ENCODE measurements at regions of chr5 and their contacts with region 1.

Region 1: GRCh38 chr5:173615884-173616576 is 420 bp downstream of the BOD1 start:
- DNase-seq: peak; percentile 47 to 78 (median 73)
- ATAC-seq: peak; percentile 73
- H3K4me3 ChIP-seq: peak overlapping the region; percentile 71
- H3K4me3 Mint-ChIP-seq: peak overlapping the region; percentile 85 to 97 (median 92)
- H3K27ac ChIP-seq: peak overlapping the region; percentile 99
- H3K27ac Mint-ChIP-seq: peak overlapping the region; percentile 79 to 98 (median 93)
- H3K4me1 ChIP-seq: peaks cover 21 to 24% of the 10 kb centered on the region in 2 donors
- H3K4me1 Mint-ChIP-seq: peaks cover 28 to 60% (median 51%) of the 10 kb centered on the region in 7 donors
- H3K27me3 ChIP-seq: no peaks in the 10 kb centered on the region
- H3K27me3 Mint-ChIP-seq: no peaks in the 10 kb centered on the region

Region 2: DNA sequence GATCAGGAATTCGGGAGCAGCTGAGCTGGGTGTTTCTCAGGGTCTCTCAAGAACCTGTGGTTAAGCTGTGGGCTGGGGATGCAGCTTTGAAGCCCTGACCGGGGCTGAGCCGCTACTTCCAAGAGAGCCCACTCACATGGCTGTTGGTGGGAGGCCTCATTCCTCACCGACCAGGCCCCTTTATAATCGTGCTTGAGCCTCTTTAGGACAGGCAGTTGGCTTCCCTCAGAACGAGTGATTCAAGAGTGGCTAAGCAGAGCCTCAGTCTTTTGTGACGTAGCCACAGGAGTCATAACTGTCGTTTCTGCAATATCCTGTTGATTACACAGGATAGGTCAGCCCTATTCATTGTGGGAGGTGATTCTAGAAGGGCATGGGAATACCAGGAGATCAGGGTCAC is 785.2 kb before region 1 on chr5:
- CTCF ChIA-PET with region 1: no interaction called
- POLR2A ChIA-PET with region 1: no interaction called
- intact Hi-C with region 1: no loop called
- DNase-seq: no peak
- ATAC-seq: peak; percentile 52
- H3K4me3 ChIP-seq: no peak overlapping the region
- H3K4me3 Mint-ChIP-seq: peak overlapping the region in 1 of 10 donors; percentile 13
- H3K27ac ChIP-seq: no peak overlapping the region
- H3K27ac Mint-ChIP-seq: no peak overlapping the region
- H3K4me1 ChIP-seq: peaks cover 11% of the 10 kb centered on the region in 2 donors
- H3K4me1 Mint-ChIP-seq: peaks cover 7 to 21% (median 14%) of the 10 kb centered on the region in 7 donors
- H3K27me3 ChIP-seq: no peaks in the 10 kb centered on the region
- H3K27me3 Mint-ChIP-seq: no peaks in the 10 kb centered on the region

Region 3: GRCh38 chr5:172984243-172984953 is 631.6 kb before region 1 on chr5:
- CTCF ChIA-PET with region 1: no interaction called
- POLR2A ChIA-PET with region 1: no interaction called
- intact Hi-C with region 1: loop called (anchors 1 to 5 kb)
- DNase-seq: peak; percentile 47 to 90 (median 82)
- ATAC-seq: peak; percentile 86
- H3K4me3 ChIP-seq: peak overlapping the region; percentile 64
- H3K4me3 Mint-ChIP-seq: peak overlapping the region; percentile 88 to 99 (median 97)
- H3K27ac ChIP-seq: peak overlapping the region; percentile 92
- H3K27ac Mint-ChIP-seq: peak overlapping the region; percentile 92 to 99 (median 98)
- H3K4me1 ChIP-seq: peaks cover 16 to 26% of the 10 kb centered on the region in 2 donors
- H3K4me1 Mint-ChIP-seq: peaks cover 20 to 71% (median 48%) of the 10 kb centered on the region in 7 donors
- H3K27me3 ChIP-seq: no peaks in the 10 kb centered on the region
- H3K27me3 Mint-ChIP-seq: no peaks in the 10 kb centered on the region

Region 4: DNA sequence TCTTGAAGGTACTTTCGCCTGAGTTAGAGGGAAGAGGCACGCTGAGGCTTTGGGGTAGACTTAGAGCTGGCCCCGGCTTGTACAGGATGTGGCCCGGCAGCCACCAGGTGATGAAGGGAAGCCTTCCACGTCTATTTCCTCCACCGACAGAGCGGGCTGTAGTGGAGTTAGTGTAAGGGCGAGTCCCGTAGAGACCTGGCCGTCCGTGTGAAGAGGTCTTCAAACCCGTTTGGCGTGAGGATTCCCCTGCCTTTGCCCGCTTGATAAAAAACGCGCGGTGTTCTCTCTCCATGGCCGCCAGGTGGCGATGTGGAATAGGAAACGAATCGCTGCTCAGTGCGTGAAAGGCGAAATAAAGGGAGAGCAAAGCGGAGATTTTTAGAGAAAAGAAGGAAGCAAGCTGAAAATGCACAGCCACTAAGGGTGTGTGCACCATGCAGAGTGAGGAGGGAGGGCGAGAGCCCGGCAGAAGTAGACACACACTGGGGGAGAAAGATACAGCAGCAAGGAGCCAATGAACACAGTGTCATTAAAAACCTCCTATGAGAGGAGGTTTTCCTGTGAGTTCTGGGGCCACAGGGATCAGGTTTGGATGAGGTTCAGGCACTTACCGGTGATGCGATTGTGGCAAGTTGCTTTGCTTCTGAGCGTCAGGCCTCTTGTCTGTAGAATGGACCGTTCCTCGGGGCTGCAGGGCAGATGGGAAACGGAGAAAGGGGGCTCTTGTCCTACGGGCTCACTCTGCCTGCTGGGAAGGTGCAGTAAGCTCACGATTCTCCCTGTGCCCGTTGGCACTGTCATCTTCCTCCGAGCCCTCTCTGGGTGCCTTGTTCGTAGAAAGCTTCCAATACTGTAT is 322.0 kb before region 1 on chr5:
- CTCF ChIA-PET with region 1: interaction called, 3 read pairs
- POLR2A ChIA-PET with region 1: no interaction called
- intact Hi-C with region 1: loop called in 1 of 2 experiments (anchors 1 kb)
- DNase-seq: peak; percentile 34 to 75 (median 58)
- ATAC-seq: peak; percentile 78
- H3K4me3 ChIP-seq: peak overlapping the region; percentile 34
- H3K4me3 Mint-ChIP-seq: peak overlapping the region; percentile 24 to 88 (median 75)
- H3K27ac ChIP-seq: no peak overlapping the region
- H3K27ac Mint-ChIP-seq: no peak overlapping the region
- H3K4me1 ChIP-seq: peaks cover 4 to 11% of the 10 kb centered on the region in 2 donors
- H3K4me1 Mint-ChIP-seq: peaks cover 11 to 18% (median 13%) of the 10 kb centered on the region in 7 donors
- H3K27me3 ChIP-seq: no peaks in the 10 kb centered on the region
- H3K27me3 Mint-ChIP-seq: peaks cover 45 to 63% (median 52%) of the 10 kb centered on the region in 5 donors

Region 5: DNA sequence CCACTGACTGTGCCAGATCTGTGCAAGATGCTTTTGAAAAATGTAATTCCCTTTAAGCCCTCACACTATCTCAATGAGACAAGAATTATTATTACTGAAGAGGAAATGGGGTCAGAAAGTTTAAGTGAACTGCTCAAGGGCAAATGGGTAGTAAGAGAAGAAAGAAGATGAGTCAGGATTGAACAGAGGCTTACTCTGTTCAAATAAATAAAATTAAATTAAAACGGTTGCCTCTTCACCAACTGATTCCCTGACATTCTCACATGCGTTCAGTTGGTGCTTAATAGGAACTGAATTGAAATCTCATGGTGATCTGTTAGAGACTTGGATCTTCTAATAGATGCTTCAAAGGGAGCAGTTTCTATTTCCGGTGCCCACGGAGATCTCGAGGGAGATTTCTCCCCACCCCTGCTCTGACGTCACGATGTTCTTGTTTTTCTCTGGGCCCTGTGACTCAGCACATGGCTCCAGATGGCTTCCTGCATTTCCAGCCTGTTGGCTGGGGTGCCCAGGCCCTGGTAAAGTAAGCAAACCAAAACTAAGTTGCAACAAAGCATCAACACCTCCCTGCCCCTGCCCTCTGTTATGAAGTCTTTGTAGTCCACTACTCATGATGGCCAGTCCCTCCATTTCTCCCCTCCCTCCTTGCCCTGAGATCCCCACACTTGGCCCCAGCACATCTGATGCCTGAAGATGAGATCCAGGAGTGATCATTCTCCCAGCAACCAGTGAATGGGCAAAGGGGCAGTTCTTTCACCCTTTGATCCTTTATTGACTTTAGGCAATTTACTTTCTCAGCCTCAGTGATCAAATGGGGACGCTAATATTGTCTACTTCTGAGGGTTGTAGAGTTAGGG is 166.0 kb after region 1 on chr5:
- CTCF ChIA-PET with region 1: no interaction called
- POLR2A ChIA-PET with region 1: no interaction called
- intact Hi-C with region 1: loop called in 1 of 2 experiments (anchors 2 kb)
- DNase-seq: peak; percentile 30 to 65 (median 59)
- ATAC-seq: peak; percentile 89
- H3K4me3 ChIP-seq: no peak overlapping the region
- H3K4me3 Mint-ChIP-seq: peak overlapping the region in 6 of 10 donors; percentile 1 to 46 (median 19)
- H3K27ac ChIP-seq: no peak overlapping the region
- H3K27ac Mint-ChIP-seq: peak overlapping the region; percentile 16 to 84 (median 79)
- H3K4me1 ChIP-seq: peaks cover 4 to 6% of the 10 kb centered on the region in 2 donors
- H3K4me1 Mint-ChIP-seq: peaks cover 7 to 26% (median 15%) of the 10 kb centered on the region in 7 donors
- H3K27me3 ChIP-seq: no peaks in the 10 kb centered on the region
- H3K27me3 Mint-ChIP-seq: peaks cover 0 to under 1% (median 0%) of the 10 kb centered on the region in 5 donors

Region 6: DNA sequence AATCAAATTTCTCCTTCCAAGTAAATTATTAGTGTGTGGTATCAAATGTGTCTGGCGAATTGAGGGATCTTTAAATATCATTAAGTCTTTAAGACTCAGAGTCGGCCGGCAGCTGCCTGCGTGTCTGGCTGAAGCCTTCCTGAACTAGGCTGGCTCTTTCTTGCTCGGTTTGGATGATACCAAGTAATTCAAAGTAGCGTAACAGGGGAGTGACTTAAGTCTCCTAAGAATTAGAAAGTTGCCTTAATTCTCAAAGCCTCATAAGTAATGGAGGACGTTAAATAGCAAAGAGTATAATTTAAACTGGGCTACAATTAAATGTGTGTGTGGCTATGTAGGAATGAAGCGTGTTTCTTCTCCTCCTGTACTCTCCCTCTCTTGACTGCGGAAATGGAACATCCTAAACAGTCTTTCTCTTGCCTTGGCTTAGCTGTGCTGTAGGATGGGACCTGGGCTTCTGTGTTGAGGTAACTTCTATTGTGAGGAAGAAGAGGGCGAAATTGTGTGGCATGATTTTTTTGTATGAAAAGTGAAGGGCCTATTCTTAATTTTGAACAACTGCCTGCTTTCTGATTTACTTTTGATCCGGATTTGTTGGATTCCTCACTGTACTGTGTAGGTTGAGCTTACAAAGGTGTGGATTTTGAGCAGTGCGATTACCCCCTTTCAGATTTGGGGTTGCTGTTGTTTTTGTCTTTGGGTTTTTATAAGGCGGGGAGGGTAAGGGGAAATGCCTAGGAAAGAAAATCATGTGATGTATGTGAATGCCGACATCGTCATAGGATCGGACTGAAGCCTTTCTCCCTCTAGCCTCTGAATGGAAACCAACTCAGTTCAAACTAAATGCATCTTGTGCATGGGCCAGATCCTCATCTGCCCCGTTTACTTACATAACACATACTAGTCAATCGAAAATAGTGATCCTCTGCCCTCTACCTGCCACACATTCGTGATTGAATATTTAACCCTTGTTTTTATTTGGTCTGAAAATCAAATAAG is 302.1 kb after region 1 on chr5:
- CTCF ChIA-PET with region 1: interaction called, 11 read pairs
- POLR2A ChIA-PET with region 1: interaction called, 42 read pairs
- intact Hi-C with region 1: loop called (anchors 1 kb)
- DNase-seq: peak; percentile 14 to 89 (median 78)
- ATAC-seq: peak; percentile 92
- H3K4me3 ChIP-seq: peak overlapping the region; percentile 65
- H3K4me3 Mint-ChIP-seq: no peak overlapping the region
- H3K27ac ChIP-seq: peak overlapping the region; percentile 82
- H3K27ac Mint-ChIP-seq: no peak overlapping the region
- H3K4me1 ChIP-seq: peaks cover 4 to 11% of the 10 kb centered on the region in 2 donors
- H3K4me1 Mint-ChIP-seq: peaks cover 0 to 21% (median 6%) of the 10 kb centered on the region in 7 donors
- H3K27me3 ChIP-seq: no peaks in the 10 kb centered on the region
- H3K27me3 Mint-ChIP-seq: no peaks in the 10 kb centered on the region

Region 7: GRCh38 chr5:173972925-173973615 is 357.0 kb after region 1 on chr5:
- CTCF ChIA-PET with region 1: interaction called, 68 read pairs
- POLR2A ChIA-PET with region 1: interaction called, 23 read pairs
- intact Hi-C with region 1: loop called (anchors 1 kb)
- DNase-seq: peak; percentile 51 to 76 (median 71)
- ATAC-seq: peak; percentile 91
- H3K4me3 ChIP-seq: peak overlapping the region; percentile 38
- H3K4me3 Mint-ChIP-seq: peak overlapping the region; percentile 70 to 89 (median 84)
- H3K27ac ChIP-seq: no peak overlapping the region
- H3K27ac Mint-ChIP-seq: peak overlapping the region in 5 of 9 donors; percentile 33 to 60 (median 50)
- H3K4me1 ChIP-seq: peaks cover 4 to 6% of the 10 kb centered on the region in 2 donors
- H3K4me1 Mint-ChIP-seq: peaks cover 0 to 13% (median 10%) of the 10 kb centered on the region in 7 donors
- H3K27me3 ChIP-seq: no peaks in the 10 kb centered on the region
- H3K27me3 Mint-ChIP-seq: peaks cover 5 to 33% (median 8%) of the 10 kb centered on the region in 5 donors